ENCODE measurements at regions of chr5 and their contacts with region 1.

Region 1: GRCh38 chr5:115098041-115098702 is 71.5 kb downstream of the TRIM36 start:
- DNase-seq: no peak
- H3K4me3 ChIP-seq: no peak overlapping the region
- H3K27ac ChIP-seq: no peak overlapping the region
- H3K4me1 ChIP-seq: peaks cover 0 to 2% (median 1%) of the 10 kb centered on the region in 4 experiments; a peak in 2 of 7 replicates
- H3K27me3 ChIP-seq: no peaks in the 10 kb centered on the region
- CTCF ChIP-seq: peak in 2 of 3 experiments; percentile 53 to 78; a peak in 3 of 4 replicates
- EP300 ChIP-seq: no peak
- POLR2A ChIP-seq: no peak
- RAD21 ChIP-seq: peak; percentile 83 to 84

Region 2: GRCh38 chr5:115079924-115080623 is 18.1 kb before region 1 on chr5:
- CTCF ChIA-PET with region 1: interaction called, 13 read pairs
- POLR2A ChIA-PET with region 1: no interaction called
- DNase-seq: no peak
- H3K4me3 ChIP-seq: no peak overlapping the region
- H3K27ac ChIP-seq: no peak overlapping the region
- H3K4me1 ChIP-seq: no peaks in the 10 kb centered on the region
- H3K27me3 ChIP-seq: no peaks in the 10 kb centered on the region
- CTCF ChIP-seq: no peak
- EP300 ChIP-seq: no peak
- POLR2A ChIP-seq: no peak
- RAD21 ChIP-seq: no peak

Region 3: GRCh38 chr5:115116001-115116400 is 17.8 kb after region 1 on chr5:
- CTCF ChIA-PET with region 1: interaction called, 10 read pairs
- POLR2A ChIA-PET with region 1: no interaction called
- DNase-seq: no peak
- H3K4me3 ChIP-seq: no peak overlapping the region
- H3K27ac ChIP-seq: no peak overlapping the region
- H3K4me1 ChIP-seq: no peaks in the 10 kb centered on the region
- H3K27me3 ChIP-seq: no peaks in the 10 kb centered on the region
- CTCF ChIP-seq: no peak
- EP300 ChIP-seq: no peak
- POLR2A ChIP-seq: no peak
- RAD21 ChIP-seq: no peak

Region 4: DNA sequence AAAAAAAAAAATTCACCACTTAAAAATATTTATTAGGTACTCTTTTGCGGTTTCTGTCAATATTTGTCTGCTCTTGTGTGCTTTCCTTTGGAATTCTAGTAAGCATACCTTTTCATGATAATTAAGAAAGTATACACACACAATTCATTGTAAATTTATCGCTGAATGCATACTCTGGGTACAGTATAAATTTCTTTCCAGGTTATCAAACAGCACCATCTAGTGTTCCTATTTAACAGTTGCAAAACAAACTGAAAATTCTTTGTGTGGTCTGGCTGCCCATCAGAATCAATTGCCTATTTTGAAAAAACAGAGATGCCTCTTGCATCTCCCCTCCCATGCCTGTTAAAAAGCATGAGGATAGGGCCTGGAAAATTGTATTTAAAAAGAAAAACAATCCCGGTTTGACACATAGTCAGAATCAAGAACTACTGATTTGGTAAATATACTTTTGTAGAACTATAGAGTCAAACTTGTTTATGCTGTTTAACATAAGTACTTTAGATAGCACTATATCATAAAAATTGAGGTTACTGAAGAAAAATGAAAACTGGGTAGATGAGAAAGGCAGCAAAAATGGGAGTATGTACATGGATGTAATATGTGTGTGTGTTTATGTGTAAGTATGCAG is 148.3 kb after region 1 on chr5:
- CTCF ChIA-PET with region 1: interaction called, 13 read pairs
- POLR2A ChIA-PET with region 1: no interaction called
- DNase-seq: no peak
- H3K4me3 ChIP-seq: no peak overlapping the region
- H3K27ac ChIP-seq: no peak overlapping the region
- H3K4me1 ChIP-seq: no peaks in the 10 kb centered on the region
- H3K27me3 ChIP-seq: no peaks in the 10 kb centered on the region
- CTCF ChIP-seq: peak in 2 of 3 experiments; percentile 42 to 57; a peak in 2 of 4 replicates
- EP300 ChIP-seq: no peak
- POLR2A ChIP-seq: no peak
- RAD21 ChIP-seq: peak; percentile 74 to 80

Measured in H1 (cell line).